ENCODE measurements at regions of chr4 and their contacts with region 1.

Region 1: DNA sequence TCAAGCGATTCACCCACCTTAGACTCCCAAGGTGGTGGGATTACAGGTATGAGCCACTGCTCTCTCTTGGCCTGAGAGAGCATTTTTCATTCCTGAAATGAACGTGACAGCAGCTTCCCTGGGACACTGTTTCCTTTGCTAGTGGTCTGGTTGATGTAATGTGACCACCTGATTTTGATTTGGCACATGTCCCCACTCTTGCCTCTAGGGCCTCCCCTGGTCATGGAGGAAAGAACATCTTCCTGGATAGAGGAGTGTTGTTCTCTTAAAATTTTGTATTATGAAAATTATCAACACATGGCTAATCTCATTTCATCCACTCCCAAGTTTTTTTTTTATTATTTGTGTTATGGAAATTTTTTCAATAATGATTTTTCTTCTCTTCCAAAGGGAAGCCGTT is 23.8 kb downstream of the SLC9B2 start:
- DNase-seq: no peak
- ATAC-seq: no peak
- H3K4me3 ChIP-seq: no peak overlapping the region
- H3K27ac ChIP-seq: no peak overlapping the region
- H3K4me1 ChIP-seq: no peaks in the 10 kb centered on the region
- H3K27me3 ChIP-seq: no peaks in the 10 kb centered on the region
- CTCF ChIP-seq: no peak
- POLR2A ChIP-seq: no peak

Region 2: DNA sequence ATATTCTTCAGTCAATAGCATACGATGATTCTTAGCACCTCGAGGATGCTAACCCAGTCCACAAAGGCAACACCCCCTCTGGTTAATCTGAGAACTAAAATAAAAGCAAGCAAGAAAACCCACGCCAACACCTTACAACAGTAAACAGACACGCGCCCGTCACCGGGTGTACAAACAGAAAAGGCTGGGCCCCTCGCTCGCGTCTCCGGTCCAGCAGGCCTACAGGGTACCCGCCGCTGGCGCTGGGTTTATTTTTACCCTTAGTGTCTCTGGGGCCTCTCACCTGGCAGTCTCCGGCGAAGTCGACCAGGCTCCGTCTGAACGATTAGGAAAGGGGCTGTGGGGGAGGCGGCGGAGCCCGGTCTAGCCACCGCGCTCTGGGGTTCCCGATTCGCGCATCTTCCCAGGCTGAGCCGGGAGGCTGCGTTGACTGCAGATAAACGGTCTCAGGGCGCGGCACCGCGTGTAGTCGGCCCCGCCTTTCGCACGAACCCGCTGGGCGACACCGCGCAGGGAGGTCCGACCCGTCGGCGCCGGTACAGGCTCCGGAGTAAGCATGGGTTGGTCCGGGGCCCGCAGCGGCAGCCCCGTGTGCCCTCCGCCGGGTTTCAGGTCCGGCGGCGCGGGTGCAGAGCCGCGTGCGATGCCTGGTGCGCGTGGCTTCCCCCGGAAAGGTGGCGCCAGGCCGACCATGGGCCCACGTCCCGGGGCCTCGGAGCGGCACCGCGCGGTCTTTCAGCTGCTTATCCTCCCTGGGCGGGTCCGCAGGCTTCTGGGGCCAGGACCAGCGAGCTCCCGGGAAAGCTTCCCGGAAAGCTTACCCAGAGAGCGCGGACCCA is 23.3 kb after region 1 on chr4:
- in situ Hi-C with region 1: no loop called
- intact Hi-C with region 1: loop called (anchors 2 kb)
- DNase-seq: peak; percentile 27 to 50
- ATAC-seq: peak; percentile 77 to 82
- H3K4me3 ChIP-seq: peak overlapping the region; percentile 69 to 94 (median 78)
- H3K27ac ChIP-seq: peak overlapping the region; percentile 79 to 95 (median 82)
- H3K4me1 ChIP-seq: peaks cover 6 to 21% of the 10 kb centered on the region in 2 donors
- H3K27me3 ChIP-seq: no peaks in the 10 kb centered on the region
- CTCF ChIP-seq: no peak
- POLR2A ChIP-seq: peak; percentile 13 to 45